ENCODE measurements at regions of chr16 and their contacts with region 1.

Region 1: DNA sequence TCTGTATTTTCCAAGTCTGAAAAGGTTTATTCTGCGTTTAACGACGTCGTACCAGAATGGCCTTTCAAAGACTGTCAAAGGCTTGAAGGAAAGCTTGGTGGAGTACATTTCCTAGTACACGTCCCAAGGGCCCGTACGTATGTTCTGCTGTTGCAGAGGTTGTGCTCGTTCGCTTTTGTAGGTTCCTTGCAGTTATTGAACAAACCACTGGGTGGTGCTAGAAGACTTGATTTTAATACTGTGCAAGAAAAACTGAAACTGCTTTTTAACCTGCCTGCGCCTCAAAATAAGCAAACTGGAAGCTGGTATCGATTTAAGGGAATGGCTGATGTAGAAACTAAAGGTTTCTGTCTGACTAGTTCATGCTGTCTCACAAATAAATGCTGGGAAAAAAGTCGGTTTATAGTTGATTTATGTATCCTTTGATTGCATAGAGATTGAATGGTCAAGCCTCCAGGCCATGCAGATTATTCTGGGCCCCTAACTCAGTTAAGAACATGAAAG is 54.6 kb downstream of the USP10 start:
- DNase-seq: peak; percentile 81
- H3K4me3 Mint-ChIP-seq: no peak overlapping the region
- H3K27ac Mint-ChIP-seq: peak overlapping the region; percentile 57
- H3K4me1 Mint-ChIP-seq: peaks cover 18% of the 10 kb centered on the region
- H3K27me3 Mint-ChIP-seq: no peaks in the 10 kb centered on the region
- CTCF ChIP-seq: peak; percentile 67

Region 2: GRCh38 chr16:84518748-84519341 is 235.6 kb before region 1 on chr16:
- CTCF ChIA-PET with region 1: no interaction called
- POLR2A ChIA-PET with region 1: no interaction called
- intact Hi-C with region 1: no loop called
- DNase-seq: no peak
- H3K4me3 Mint-ChIP-seq: no peak overlapping the region
- H3K27ac Mint-ChIP-seq: no peak overlapping the region
- H3K4me1 Mint-ChIP-seq: no peaks in the 10 kb centered on the region
- H3K27me3 Mint-ChIP-seq: no peaks in the 10 kb centered on the region
- CTCF ChIP-seq: no peak

Region 3: DNA sequence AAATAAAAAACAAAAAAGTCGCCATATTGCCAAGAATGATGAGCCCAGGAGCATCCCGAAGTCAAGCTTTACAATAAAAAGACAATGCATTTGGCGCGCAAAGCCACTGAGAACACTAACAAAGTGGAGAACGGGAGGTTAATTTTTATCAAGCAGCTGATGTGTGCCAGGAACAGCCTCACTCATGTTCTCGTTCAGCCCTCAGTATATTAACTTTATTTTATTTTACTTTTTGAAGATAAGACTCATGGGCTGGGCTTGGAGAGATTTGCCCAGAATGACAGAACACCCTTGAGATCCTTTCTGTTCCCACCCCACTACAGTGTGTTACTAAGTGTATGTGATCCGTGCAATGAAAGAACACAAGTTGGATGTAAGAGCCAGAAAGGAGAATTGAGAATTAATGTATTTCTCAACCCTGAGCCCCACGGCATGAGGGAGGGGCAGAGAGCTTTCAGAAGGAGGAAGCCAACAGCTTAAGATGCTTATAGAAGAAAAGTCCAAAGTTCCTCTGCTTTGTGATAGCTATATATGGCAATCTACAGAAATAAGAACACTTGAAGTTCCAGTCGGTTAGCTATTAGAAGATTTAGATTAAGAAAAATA is 184.9 kb before region 1 on chr16:
- CTCF ChIA-PET with region 1: no interaction called
- POLR2A ChIA-PET with region 1: no interaction called
- intact Hi-C with region 1: no loop called
- DNase-seq: no peak
- H3K4me3 Mint-ChIP-seq: no peak overlapping the region
- H3K27ac Mint-ChIP-seq: no peak overlapping the region
- H3K4me1 Mint-ChIP-seq: no peaks in the 10 kb centered on the region
- H3K27me3 Mint-ChIP-seq: no peaks in the 10 kb centered on the region
- CTCF ChIP-seq: no peak

Region 4: DNA sequence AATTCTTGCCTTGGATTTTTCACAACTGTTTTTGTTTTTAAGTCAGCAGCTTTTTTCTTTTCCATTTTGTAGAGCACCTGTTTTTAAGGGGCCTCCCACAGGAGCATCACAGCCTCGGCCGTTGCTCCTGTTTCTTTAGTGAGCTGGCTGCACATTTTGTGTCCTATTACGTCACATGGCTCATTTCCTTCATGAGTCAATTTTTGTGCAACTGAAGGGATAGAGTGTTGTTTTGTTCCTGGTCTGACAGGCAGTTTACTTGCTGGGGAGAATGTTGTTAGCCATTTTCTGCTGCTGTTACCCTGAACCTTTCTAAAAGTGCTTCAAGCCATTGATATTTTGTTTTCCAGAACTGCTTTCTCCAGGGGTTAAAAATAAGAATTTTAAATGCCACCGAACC is 20.4 kb after region 1 on chr16:
- CTCF ChIA-PET with region 1: interaction called, 20 read pairs
- POLR2A ChIA-PET with region 1: interaction called, 3 read pairs
- intact Hi-C with region 1: no loop called
- DNase-seq: peak; percentile 86
- H3K4me3 Mint-ChIP-seq: no peak overlapping the region
- H3K27ac Mint-ChIP-seq: peak overlapping the region; percentile 82
- H3K4me1 Mint-ChIP-seq: peaks cover 8% of the 10 kb centered on the region
- H3K27me3 Mint-ChIP-seq: no peaks in the 10 kb centered on the region
- CTCF ChIP-seq: no peak

Region 5: GRCh38 chr16:84952335-84953189 is 198.2 kb after region 1 on chr16:
- CTCF ChIA-PET with region 1: interaction called, 137 read pairs
- POLR2A ChIA-PET with region 1: interaction called, 5 read pairs
- intact Hi-C with region 1: loop called (anchors 1 kb)
- DNase-seq: peak; percentile 83
- H3K4me3 Mint-ChIP-seq: no peak overlapping the region
- H3K27ac Mint-ChIP-seq: no peak overlapping the region
- H3K4me1 Mint-ChIP-seq: no peaks in the 10 kb centered on the region
- H3K27me3 Mint-ChIP-seq: no peaks in the 10 kb centered on the region
- CTCF ChIP-seq: peak; percentile 76

Region 6: GRCh38 chr16:84976644-84977400 is 222.4 kb after region 1 on chr16:
- CTCF ChIA-PET with region 1: interaction called, 137 read pairs
- POLR2A ChIA-PET with region 1: interaction called, 8 read pairs
- intact Hi-C with region 1: no loop called
- DNase-seq: no peak
- H3K4me3 Mint-ChIP-seq: no peak overlapping the region
- H3K27ac Mint-ChIP-seq: no peak overlapping the region
- H3K4me1 Mint-ChIP-seq: peaks cover 4% of the 10 kb centered on the region
- H3K27me3 Mint-ChIP-seq: no peaks in the 10 kb centered on the region
- CTCF ChIP-seq: no peak